MCF 10A (cell line): ENCODE measurements at regions of chr3 and their contacts with region 1.

Region 1: GRCh38 chr3:46078712-46079400 is 51.6 kb upstream of the XCR1 start:
- DNase-seq: peak; percentile 96
- H3K4me3 Mint-ChIP-seq: no peak overlapping the region
- H3K27ac Mint-ChIP-seq: no peak overlapping the region
- H3K4me1 Mint-ChIP-seq: peaks cover 5% of the 10 kb centered on the region
- H3K27me3 Mint-ChIP-seq: peaks cover 11% of the 10 kb centered on the region
- CTCF ChIP-seq: peak; percentile 98

Region 2: DNA sequence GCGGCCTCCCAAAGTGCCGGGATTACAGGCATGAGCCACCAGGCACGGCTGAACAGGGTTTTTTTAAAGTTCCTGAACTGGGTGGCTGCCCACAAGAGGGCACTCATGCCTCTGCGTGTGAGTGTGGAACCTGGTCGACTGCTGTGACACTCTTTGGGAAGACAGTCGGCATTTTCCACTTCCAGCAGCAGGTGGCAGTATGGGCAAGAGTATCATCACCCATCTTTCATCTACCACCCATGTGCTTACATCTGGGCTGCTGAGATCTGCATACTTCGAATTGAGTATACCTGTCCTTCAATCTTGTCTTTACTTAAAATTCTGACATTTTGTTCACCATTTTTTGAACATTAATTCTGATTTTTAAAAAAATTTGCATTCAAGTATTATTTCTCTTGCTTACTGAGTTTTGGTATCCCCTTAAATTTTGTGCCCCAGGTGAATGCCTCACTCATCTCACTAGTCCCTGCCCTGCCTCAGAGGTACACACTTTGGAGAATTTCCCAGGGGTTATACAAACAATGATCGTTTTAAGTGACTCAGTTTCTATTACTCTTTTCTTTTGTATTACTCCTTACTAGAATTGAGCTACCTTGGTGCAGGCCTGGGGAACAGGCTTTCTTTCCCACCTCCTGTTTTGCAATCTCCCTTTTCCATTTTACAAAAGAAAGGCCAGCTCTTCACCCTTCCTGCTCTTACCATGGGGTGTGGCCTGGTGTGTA is 1041.0 kb before region 1 on chr3:
- CTCF ChIA-PET with region 1: interaction called, 4 read pairs
- POLR2A ChIA-PET with region 1: no interaction called
- intact Hi-C with region 1: loop called (anchors 2 kb)
- DNase-seq: peak; percentile 97
- H3K4me3 Mint-ChIP-seq: no peak overlapping the region
- H3K27ac Mint-ChIP-seq: no peak overlapping the region
- H3K4me1 Mint-ChIP-seq: peaks cover 4% of the 10 kb centered on the region
- H3K27me3 Mint-ChIP-seq: no peaks in the 10 kb centered on the region
- CTCF ChIP-seq: peak; percentile 82

Region 3: GRCh38 chr3:45921062-45921848 is 157.6 kb before region 1 on chr3:
- CTCF ChIA-PET with region 1: interaction called, 12 read pairs
- POLR2A ChIA-PET with region 1: no interaction called
- intact Hi-C with region 1: no loop called
- DNase-seq: no peak
- H3K4me3 Mint-ChIP-seq: no peak overlapping the region
- H3K27ac Mint-ChIP-seq: no peak overlapping the region
- H3K4me1 Mint-ChIP-seq: no peaks in the 10 kb centered on the region
- H3K27me3 Mint-ChIP-seq: no peaks in the 10 kb centered on the region
- CTCF ChIP-seq: no peak

Region 4: DNA sequence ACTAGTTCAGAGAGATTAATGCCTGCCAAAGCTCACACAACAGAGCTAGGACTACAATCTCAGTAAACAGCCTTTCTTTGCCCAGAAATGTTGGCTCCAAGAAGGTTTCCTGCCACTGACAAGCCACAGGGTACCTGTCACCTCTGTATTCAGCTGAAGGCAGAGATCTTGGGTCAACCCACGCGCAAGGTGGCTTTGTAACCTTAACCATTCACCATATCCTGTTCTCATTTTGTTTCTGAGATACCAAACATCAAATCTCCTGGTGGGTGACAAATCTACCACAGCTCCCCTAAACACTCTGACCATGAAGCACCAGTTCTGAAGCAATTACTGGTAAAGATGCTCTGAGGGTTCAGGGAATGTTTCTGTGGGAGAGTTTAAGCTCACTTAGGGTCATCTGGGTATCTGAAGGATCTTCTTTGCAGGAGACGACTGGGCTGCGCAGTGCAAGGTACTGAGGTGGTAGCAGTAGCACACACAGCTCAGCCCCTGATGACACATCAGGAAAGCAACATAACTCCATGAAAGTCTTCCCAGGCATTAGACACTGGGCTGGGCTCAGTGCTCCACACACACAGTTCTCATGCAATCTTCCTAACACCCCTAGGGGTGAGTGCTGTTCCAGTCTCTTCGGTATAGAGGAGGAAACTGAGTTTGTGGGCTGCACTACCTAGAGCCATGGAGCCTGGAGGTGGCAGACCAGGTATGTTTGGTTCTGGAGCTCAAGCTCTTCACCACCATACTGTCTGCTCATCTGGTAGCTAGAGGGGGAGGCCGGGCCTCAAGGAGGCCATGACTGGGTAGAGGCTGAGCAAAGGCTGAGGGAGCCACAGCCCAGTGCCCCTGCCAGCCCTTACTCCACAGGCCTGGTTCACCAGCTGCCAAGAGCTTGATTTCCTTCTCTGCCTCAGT is 127.9 kb before region 1 on chr3:
- CTCF ChIA-PET with region 1: interaction called, 12 read pairs
- POLR2A ChIA-PET with region 1: no interaction called
- intact Hi-C with region 1: no loop called
- DNase-seq: no peak
- H3K4me3 Mint-ChIP-seq: no peak overlapping the region
- H3K27ac Mint-ChIP-seq: no peak overlapping the region
- H3K4me1 Mint-ChIP-seq: no peaks in the 10 kb centered on the region
- H3K27me3 Mint-ChIP-seq: no peaks in the 10 kb centered on the region
- CTCF ChIP-seq: no peak

Region 5: GRCh38 chr3:46065294-46065721 is 13.5 kb before region 1 on chr3:
- CTCF ChIA-PET with region 1: interaction called, 35 read pairs
- POLR2A ChIA-PET with region 1: interaction called, 6 read pairs
- intact Hi-C with region 1: no loop called
- DNase-seq: peak; percentile 73
- H3K4me3 Mint-ChIP-seq: no peak overlapping the region
- H3K27ac Mint-ChIP-seq: no peak overlapping the region
- H3K4me1 Mint-ChIP-seq: peaks cover 6% of the 10 kb centered on the region
- H3K27me3 Mint-ChIP-seq: peaks cover 38% of the 10 kb centered on the region
- CTCF ChIP-seq: no peak

Region 6: GRCh38 chr3:46378426-46378942 is 299.6 kb after region 1 on chr3:
- CTCF ChIA-PET with region 1: interaction called, 202 read pairs
- POLR2A ChIA-PET with region 1: no interaction called
- intact Hi-C with region 1: loop called (anchors 2 kb)
- DNase-seq: peak; percentile 73
- H3K4me3 Mint-ChIP-seq: no peak overlapping the region
- H3K27ac Mint-ChIP-seq: peak overlapping the region; percentile 4
- H3K4me1 Mint-ChIP-seq: peaks cover 16% of the 10 kb centered on the region
- H3K27me3 Mint-ChIP-seq: peaks cover 33% of the 10 kb centered on the region
- CTCF ChIP-seq: peak; percentile 73